T-cell (primary cell): ENCODE measurements at regions of chr10 and their contacts with region 1.

Region 1: DNA sequence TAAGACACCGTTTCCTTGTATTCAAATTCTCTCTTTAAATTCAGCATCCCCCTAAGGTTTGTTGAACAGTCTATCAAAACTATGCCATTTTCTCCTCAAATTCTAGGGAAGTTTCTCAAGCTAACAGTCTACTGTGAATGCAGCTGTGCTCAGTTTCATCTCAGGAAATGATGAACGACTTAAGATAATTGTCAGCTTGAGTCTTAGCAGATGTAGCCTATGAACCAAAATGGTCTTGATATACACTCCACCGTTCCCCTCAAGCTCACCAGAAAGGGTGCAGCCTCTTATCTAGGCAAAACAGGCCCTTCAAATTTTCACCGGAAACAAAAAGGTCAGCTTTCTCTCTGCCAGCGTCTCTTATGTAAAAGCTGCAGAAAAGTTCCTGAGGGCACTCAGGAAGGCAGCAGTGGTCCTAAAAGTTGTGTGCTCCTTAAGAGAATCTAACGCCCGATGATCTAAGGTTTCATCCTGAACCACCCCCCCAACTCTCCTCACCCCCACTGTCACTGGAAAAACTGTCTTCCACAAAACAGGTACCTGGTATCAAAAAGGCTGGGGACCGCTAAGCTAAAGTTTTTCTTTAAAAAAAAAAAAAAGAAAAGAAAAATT is 2.1 kb downstream of the DNAJC9 start:
- DNase-seq: no peak
- ATAC-seq: no peak
- H3K4me3 ChIP-seq: no peak overlapping the region
- H3K4me3 Mint-ChIP-seq: peak overlapping the region; percentile 8 to 91 (median 44)
- H3K27ac ChIP-seq: no peak overlapping the region
- H3K27ac Mint-ChIP-seq: peak overlapping the region; percentile 60 to 68
- H3K4me1 ChIP-seq: peaks cover 16 to 19% of the 10 kb centered on the region in 2 experiments
- H3K4me1 Mint-ChIP-seq: peaks cover 36 to 50% (median 42%) of the 10 kb centered on the region in 3 donors
- H3K27me3 ChIP-seq: no peaks in the 10 kb centered on the region
- H3K27me3 Mint-ChIP-seq: no peaks in the 10 kb centered on the region

Region 2: GRCh38 chr10:73296946-73297345 is 52.0 kb after region 1 on chr10:
- CTCF ChIA-PET with region 1: no interaction called
- POLR2A ChIA-PET with region 1: interaction called in 1 of 2 experiments, 18 read pairs
- DNase-seq: no peak
- ATAC-seq: no peak
- H3K4me3 ChIP-seq: no peak overlapping the region
- H3K4me3 Mint-ChIP-seq: no peak overlapping the region
- H3K27ac ChIP-seq: no peak overlapping the region
- H3K27ac Mint-ChIP-seq: no peak overlapping the region
- H3K4me1 ChIP-seq: no peaks in the 10 kb centered on the region
- H3K4me1 Mint-ChIP-seq: peaks cover 0 to 9% (median 5%) of the 10 kb centered on the region in 3 donors
- H3K27me3 ChIP-seq: no peaks in the 10 kb centered on the region
- H3K27me3 Mint-ChIP-seq: no peaks in the 10 kb centered on the region